ENCODE measurements at regions of chr12 and their contacts with region 1.

Region 1: GRCh38 chr12:107169200-107169599 is 75.9 kb upstream of the CRY1 start:
- DNase-seq: no peak
- H3K4me3 ChIP-seq: no peak overlapping the region
- H3K27ac ChIP-seq: no peak overlapping the region
- H3K4me1 ChIP-seq: no peaks in the 10 kb centered on the region
- H3K27me3 ChIP-seq: no peaks in the 10 kb centered on the region
- CTCF ChIP-seq: no peak

Region 2: GRCh38 chr12:106945261-106945851 is 223.8 kb before region 1 on chr12:
- CTCF ChIA-PET with region 1: no interaction called
- POLR2A ChIA-PET with region 1: no interaction called
- intact Hi-C with region 1: no loop called
- DNase-seq: no peak
- H3K4me3 ChIP-seq: no peak overlapping the region
- H3K27ac ChIP-seq: no peak overlapping the region
- H3K4me1 ChIP-seq: no peaks in the 10 kb centered on the region
- H3K27me3 ChIP-seq: no peaks in the 10 kb centered on the region
- CTCF ChIP-seq: no peak

Region 3: DNA sequence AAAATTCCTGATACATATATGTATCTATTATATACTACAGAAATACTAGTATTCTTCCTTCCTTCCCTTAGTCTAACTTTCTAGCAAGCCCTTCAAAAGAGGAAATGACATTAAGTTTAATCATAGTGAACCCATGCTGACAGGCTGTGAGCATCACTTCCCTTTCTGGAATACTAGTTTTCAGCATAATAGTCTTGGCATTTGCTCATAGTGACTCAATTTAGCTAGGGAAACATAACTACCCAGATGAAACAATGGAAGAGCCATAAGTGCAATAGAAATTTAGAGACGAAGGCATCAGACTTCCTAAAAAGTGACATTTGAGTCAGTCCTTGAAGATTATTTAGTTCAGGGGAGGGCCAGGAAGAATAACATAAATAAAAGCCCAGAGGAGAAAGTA is 108.7 kb after region 1 on chr12:
- CTCF ChIA-PET with region 1: no interaction called
- POLR2A ChIA-PET with region 1: interaction called, 15 read pairs
- intact Hi-C with region 1: no loop called
- DNase-seq: no peak
- H3K4me3 ChIP-seq: no peak overlapping the region
- H3K27ac ChIP-seq: no peak overlapping the region
- H3K4me1 ChIP-seq: no peaks in the 10 kb centered on the region; the same call in 1 of the 2 replicates
- H3K27me3 ChIP-seq: no peaks in the 10 kb centered on the region
- CTCF ChIP-seq: no peak

Measured in PC-9 (cell line).